ENCODE measurements at regions of chr13 and their contacts with region 1.

Region 1: DNA sequence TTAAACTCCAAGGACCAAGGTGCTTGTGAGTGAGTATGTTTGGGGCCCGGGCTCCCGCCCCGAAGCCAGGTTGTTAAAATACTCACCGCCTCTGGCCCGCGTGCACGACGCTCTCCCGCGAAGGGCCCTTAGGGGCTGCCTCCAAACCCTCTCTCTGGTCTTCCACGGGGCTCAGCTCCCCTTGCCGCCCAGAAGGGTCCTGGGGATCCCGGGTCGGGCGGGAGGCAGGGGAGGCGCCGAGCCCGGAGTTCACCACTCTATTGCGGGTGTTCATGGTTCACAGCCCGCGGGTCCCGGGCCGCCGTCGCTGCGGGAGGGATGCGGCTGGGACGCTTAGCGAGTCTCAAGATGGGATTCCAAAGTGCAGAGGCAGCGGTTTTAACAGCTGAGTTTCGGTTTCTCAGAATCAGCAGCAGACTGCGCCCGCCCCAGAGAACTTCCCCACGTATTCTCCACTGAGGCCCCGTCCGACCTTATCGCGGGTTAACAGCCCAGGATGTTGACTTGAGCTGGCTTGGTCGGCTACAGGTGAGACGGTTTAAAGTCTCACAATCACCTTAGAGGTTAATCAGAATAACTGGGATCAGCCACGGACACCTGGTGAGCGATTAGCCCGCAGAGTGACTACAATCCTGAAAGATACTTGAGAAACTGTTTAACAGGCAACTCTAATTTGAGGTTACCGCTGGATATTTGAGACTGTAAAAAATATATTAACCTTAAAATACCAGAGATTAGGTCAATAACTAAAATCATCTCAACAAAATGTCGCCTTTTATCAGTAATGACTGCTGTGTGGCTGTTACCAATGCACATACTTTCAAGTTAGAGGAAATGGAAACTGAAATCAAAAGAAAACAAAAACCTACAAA is at the start of gene EPSTI1:
- DNase-seq: peak; percentile 53 to 84 (median 73)
- H3K4me3 ChIP-seq: peak within 1 kb of the TSS; percentile 61
- H3K4me3 Mint-ChIP-seq: peak within 1 kb of the TSS; percentile 95 to 99 (median 96)
- H3K27ac ChIP-seq: peak within 1 kb of the TSS; percentile 82
- H3K27ac Mint-ChIP-seq: peak within 1 kb of the TSS; percentile 94 to 100 (median 99)
- H3K4me1 ChIP-seq: peaks cover 26% of the 10 kb centered on the region
- H3K4me1 Mint-ChIP-seq: peaks cover 29 to 60% (median 59%) of the 10 kb centered on the region in 3 donors
- H3K27me3 ChIP-seq: no peaks in the 10 kb centered on the region
- H3K27me3 Mint-ChIP-seq: no peaks in the 10 kb centered on the region
- total RNA-seq, gene EPSTI1: 4.5 to 4.9 TPM

Region 2: DNA sequence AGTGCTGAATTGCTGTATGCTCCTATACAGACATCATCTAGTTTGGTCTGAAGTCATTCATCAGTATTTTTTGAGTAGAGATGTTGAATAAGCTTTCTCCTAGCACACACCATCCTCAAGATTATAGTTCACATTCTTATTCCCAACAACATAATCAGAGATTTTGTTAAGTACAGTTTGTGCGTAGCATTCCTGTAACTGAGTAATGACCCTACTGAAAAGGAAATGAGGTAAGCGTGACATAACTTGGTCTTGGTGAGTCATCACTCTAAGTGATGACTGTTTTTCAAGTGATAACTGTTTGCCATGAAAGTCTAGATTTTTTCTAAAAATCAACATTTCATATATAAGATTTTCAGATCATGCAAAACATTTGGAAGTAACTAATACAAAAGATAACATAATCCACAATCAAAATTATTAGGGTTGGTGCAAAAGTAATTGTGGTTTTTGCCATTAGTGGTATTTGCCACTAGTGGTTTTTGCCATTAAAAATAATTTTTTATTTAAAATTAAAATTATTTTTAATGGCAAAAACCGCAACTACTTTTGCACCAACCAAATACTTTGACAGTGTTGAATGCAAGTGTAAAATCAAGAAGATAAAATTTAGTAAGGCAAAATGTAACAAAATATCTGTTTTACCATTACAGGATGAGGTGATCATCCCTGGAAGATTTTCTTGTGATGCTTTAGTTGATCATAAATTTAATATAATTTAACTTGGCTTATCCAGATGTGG is 229.0 kb before region 1 on chr13:
- CTCF ChIA-PET with region 1: no interaction called
- POLR2A ChIA-PET with region 1: no interaction called
- DNase-seq: no peak
- H3K4me3 ChIP-seq: no peak overlapping the region
- H3K4me3 Mint-ChIP-seq: no peak overlapping the region
- H3K27ac ChIP-seq: no peak overlapping the region
- H3K27ac Mint-ChIP-seq: no peak overlapping the region
- H3K4me1 ChIP-seq: no peaks in the 10 kb centered on the region
- H3K4me1 Mint-ChIP-seq: no peaks in the 10 kb centered on the region
- H3K27me3 ChIP-seq: no peaks in the 10 kb centered on the region
- H3K27me3 Mint-ChIP-seq: peaks cover 5 to 18% of the 10 kb centered on the region in 2 donors

Region 3: GRCh38 chr13:42859760-42860159 is 132.4 kb before region 1 on chr13:
- CTCF ChIA-PET with region 1: no interaction called
- POLR2A ChIA-PET with region 1: no interaction called
- DNase-seq: no peak
- H3K4me3 ChIP-seq: no peak overlapping the region
- H3K4me3 Mint-ChIP-seq: no peak overlapping the region
- H3K27ac ChIP-seq: no peak overlapping the region
- H3K27ac Mint-ChIP-seq: no peak overlapping the region
- H3K4me1 ChIP-seq: no peaks in the 10 kb centered on the region
- H3K4me1 Mint-ChIP-seq: no peaks in the 10 kb centered on the region
- H3K27me3 ChIP-seq: no peaks in the 10 kb centered on the region
- H3K27me3 Mint-ChIP-seq: peaks cover 7 to 16% of the 10 kb centered on the region in 2 donors

Region 4: DNA sequence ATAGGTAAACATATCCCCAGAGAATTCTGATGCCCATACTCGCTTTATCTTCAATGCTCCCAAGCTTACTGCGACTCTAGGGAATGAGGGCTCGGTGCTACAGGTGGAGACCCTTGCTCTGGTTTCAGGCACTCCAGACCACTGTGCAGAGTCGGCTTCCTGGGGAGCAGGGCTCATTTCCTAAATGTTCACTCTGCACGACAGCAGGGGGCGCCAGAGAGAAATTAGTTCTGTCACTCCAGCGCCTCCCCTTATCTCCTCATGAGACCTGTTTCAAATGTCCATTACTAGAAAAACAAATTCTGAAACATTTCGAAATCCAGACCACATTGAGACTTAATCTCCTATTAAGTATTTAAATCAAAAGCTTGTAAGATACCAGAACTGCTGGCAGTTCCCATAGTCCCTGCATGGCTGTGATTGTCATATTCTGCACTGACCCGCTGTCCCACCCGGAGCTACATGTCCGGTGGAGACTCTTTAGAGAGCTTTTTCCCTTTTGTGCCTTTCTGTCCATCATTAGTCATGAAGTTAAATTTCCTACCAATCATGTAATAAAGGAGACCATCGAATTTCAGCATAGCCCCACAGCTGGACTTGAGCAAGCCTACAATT is 22.5 kb before region 1 on chr13:
- CTCF ChIA-PET with region 1: interaction called, 40 read pairs
- POLR2A ChIA-PET with region 1: interaction called, 4 read pairs
- DNase-seq: peak; percentile 64 to 85 (median 75)
- H3K4me3 ChIP-seq: no peak overlapping the region
- H3K4me3 Mint-ChIP-seq: peak overlapping the region in 1 of 7 donors; percentile 37
- H3K27ac ChIP-seq: no peak overlapping the region
- H3K27ac Mint-ChIP-seq: no peak overlapping the region
- H3K4me1 ChIP-seq: peaks cover 9% of the 10 kb centered on the region
- H3K4me1 Mint-ChIP-seq: peaks cover 13 to 23% (median 17%) of the 10 kb centered on the region in 3 donors
- H3K27me3 ChIP-seq: no peaks in the 10 kb centered on the region
- H3K27me3 Mint-ChIP-seq: no peaks in the 10 kb centered on the region

Region 5: DNA sequence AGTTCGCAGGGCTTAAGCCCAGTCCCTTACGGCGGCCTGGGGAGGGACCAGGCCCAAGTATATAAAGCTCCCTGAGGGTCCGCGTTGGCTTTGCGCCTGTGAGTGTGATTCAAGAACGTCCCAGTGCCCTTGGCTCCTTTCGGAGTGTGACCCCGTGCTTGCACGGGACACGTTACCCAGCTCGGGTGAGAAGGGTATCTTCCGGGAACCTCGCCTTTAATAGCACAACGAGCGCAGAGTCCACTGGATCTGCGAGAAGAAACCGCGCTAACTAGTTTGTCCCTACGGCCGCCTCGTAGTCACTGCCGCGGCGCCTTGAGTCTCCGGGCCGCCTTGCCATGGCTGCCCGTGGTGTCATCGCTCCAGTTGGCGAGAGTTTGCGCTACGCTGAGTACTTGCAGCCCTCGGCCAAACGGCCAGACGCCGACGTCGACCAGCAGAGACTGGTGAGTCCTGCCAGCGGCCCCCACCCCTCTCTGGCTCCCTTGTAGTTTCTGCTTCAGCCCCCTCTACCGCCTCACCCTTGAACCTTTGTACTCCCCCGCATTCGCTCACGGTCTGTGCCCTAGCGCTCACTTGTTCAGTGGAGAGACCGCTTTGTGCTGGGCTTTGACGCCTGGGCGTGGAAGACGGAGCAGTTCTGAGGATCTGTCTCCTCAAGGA is 31.3 kb after region 1 on chr13 and contains the start of gene DNAJC15:
- CTCF ChIA-PET with region 1: interaction called, 26 read pairs
- POLR2A ChIA-PET with region 1: interaction called, 23 read pairs
- DNase-seq: peak; percentile 63 to 88 (median 76)
- H3K4me3 ChIP-seq: peak within 1 kb of the TSS; percentile 77
- H3K4me3 Mint-ChIP-seq: peak within 1 kb of the TSS; percentile 97 to 100 (median 99)
- H3K27ac ChIP-seq: peak within 1 kb of the TSS; percentile 53
- H3K27ac Mint-ChIP-seq: peak within 1 kb of the TSS; percentile 92 to 99 (median 96)
- H3K4me1 ChIP-seq: peaks cover 18% of the 10 kb centered on the region
- H3K4me1 Mint-ChIP-seq: peaks cover 27 to 48% (median 43%) of the 10 kb centered on the region in 3 donors
- H3K27me3 ChIP-seq: no peaks in the 10 kb centered on the region
- H3K27me3 Mint-ChIP-seq: peaks cover 0 to 2% of the 10 kb centered on the region in 2 donors
- total RNA-seq, gene DNAJC15: 13.2 to 13.6 TPM

Region 6: GRCh38 chr13:43054803-43055802 is 63.0 kb after region 1 on chr13:
- CTCF ChIA-PET with region 1: interaction called, 4 read pairs
- POLR2A ChIA-PET with region 1: interaction called, 20 read pairs
- DNase-seq: peak in 2 of 5 donors; percentile 32 to 56
- H3K4me3 ChIP-seq: peak overlapping the region; percentile 66
- H3K4me3 Mint-ChIP-seq: no peak overlapping the region
- H3K27ac ChIP-seq: peak overlapping the region; percentile 81
- H3K27ac Mint-ChIP-seq: no peak overlapping the region
- H3K4me1 ChIP-seq: peaks cover 45% of the 10 kb centered on the region
- H3K4me1 Mint-ChIP-seq: peaks cover 5 to 41% (median 36%) of the 10 kb centered on the region in 3 donors
- H3K27me3 ChIP-seq: no peaks in the 10 kb centered on the region
- H3K27me3 Mint-ChIP-seq: peaks cover 0 to 3% of the 10 kb centered on the region in 2 donors

Region 7: DNA sequence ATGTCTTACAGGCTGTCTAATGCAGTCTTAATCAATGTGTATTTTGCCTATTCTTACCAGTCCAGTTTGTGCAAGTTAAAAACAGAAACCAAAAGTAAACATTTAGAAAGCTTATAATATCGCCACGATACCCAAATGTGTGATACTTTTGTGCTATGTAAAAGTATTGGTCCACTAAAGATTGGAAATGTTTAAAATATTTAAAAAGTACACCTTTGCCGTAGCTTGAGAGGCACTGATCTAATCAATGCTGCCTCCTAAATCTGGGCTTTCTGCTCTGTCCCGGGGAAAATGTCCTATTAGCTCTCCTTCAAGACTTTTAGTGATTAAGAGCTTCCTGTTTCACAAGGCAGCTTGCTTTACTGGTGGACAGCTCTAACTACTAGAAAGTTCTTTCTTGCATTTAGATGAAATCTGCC is 96.0 kb after region 1 on chr13:
- CTCF ChIA-PET with region 1: interaction called, 4 read pairs
- POLR2A ChIA-PET with region 1: interaction called, 10 read pairs
- DNase-seq: peak in 1 of 5 donors; percentile 4
- H3K4me3 ChIP-seq: peak overlapping the region; percentile 35
- H3K4me3 Mint-ChIP-seq: peak overlapping the region; percentile 81 to 90 (median 87)
- H3K27ac ChIP-seq: peak overlapping the region; percentile 55
- H3K27ac Mint-ChIP-seq: peak overlapping the region; percentile 69 to 94 (median 90)
- H3K4me1 ChIP-seq: no peaks in the 10 kb centered on the region
- H3K4me1 Mint-ChIP-seq: peaks cover 12 to 25% (median 21%) of the 10 kb centered on the region in 3 donors
- H3K27me3 ChIP-seq: no peaks in the 10 kb centered on the region
- H3K27me3 Mint-ChIP-seq: no peaks in the 10 kb centered on the region